ENCODE measurements at regions of chr1 and their contacts with region 1.

Region 1: GRCh38 chr1:201709564-201710295 is 119.2 kb upstream of the IPO9 start:
- DNase-seq: no peak
- H3K4me3 ChIP-seq: no peak overlapping the region
- H3K27ac ChIP-seq: peak overlapping the region; percentile 70
- H3K27me3 ChIP-seq: no peaks in the 10 kb centered on the region
- CTCF ChIP-seq: peak; percentile 85

Region 2: DNA sequence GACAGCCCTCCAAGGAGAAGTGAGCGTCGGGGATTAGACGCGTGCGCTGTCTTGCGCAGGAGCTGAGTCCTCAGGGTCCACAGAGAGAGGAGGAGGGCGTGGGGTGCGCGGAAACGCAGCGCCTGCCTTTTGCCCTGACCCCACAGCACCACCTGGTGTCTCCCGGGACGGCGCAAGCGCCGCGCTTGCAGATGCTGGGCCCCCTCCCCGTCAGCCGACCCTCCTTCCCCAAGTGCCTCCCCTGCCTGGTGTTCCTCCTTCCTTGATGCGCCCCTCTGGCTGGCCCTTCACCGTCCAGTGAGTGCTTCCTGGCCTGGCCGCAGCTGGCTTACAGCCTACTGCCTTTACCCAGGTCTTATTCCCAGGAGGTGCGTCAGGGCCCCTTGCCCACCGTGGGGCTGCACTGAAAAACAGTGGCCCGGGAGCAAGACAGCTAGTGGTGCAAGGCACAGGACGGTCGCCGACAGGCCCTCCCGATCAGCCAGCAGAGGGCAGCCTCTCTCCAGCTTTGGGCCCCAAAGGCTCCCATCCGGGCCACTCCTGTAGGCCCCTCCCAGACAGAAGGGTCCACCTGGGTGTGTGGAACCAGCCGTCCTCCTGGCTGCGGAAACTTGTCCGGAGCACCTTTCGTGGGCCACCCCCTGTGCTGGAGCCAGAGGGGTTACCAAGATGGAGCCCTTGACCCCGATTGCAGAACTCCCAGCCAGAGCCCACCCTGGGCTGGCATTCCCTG is 227.8 kb before region 1 on chr1:
- CTCF ChIA-PET with region 1: no interaction called
- POLR2A ChIA-PET with region 1: no interaction called
- DNase-seq: no peak
- H3K4me3 ChIP-seq: no peak overlapping the region
- H3K27ac ChIP-seq: no peak overlapping the region
- H3K27me3 ChIP-seq: no peaks in the 10 kb centered on the region
- CTCF ChIP-seq: peak; percentile 82

Region 3: GRCh38 chr1:201559679-201560162 is 150.0 kb before region 1 on chr1:
- CTCF ChIA-PET with region 1: interaction called, 148 read pairs
- POLR2A ChIA-PET with region 1: interaction called, 4 read pairs
- DNase-seq: peak; percentile 74
- H3K4me3 ChIP-seq: no peak overlapping the region
- H3K27ac ChIP-seq: no peak overlapping the region
- H3K27me3 ChIP-seq: no peaks in the 10 kb centered on the region
- CTCF ChIP-seq: peak; percentile 96

Region 4: GRCh38 chr1:201719812-201720521 is 10.2 kb after region 1 on chr1:
- CTCF ChIA-PET with region 1: interaction called, 28 read pairs
- POLR2A ChIA-PET with region 1: interaction called, 6 read pairs
- DNase-seq: peak; percentile 54
- H3K4me3 ChIP-seq: no peak overlapping the region
- H3K27ac ChIP-seq: peak overlapping the region; percentile 65
- H3K27me3 ChIP-seq: no peaks in the 10 kb centered on the region
- CTCF ChIP-seq: no peak

Region 5: GRCh38 chr1:201748335-201748734 is 38.6 kb after region 1 on chr1:
- CTCF ChIA-PET with region 1: interaction called, 15 read pairs
- POLR2A ChIA-PET with region 1: interaction called, 8 read pairs
- DNase-seq: peak; percentile 74
- H3K4me3 ChIP-seq: no peak overlapping the region
- H3K27ac ChIP-seq: peak overlapping the region; percentile 85
- H3K27me3 ChIP-seq: no peaks in the 10 kb centered on the region
- CTCF ChIP-seq: no peak

Region 6: DNA sequence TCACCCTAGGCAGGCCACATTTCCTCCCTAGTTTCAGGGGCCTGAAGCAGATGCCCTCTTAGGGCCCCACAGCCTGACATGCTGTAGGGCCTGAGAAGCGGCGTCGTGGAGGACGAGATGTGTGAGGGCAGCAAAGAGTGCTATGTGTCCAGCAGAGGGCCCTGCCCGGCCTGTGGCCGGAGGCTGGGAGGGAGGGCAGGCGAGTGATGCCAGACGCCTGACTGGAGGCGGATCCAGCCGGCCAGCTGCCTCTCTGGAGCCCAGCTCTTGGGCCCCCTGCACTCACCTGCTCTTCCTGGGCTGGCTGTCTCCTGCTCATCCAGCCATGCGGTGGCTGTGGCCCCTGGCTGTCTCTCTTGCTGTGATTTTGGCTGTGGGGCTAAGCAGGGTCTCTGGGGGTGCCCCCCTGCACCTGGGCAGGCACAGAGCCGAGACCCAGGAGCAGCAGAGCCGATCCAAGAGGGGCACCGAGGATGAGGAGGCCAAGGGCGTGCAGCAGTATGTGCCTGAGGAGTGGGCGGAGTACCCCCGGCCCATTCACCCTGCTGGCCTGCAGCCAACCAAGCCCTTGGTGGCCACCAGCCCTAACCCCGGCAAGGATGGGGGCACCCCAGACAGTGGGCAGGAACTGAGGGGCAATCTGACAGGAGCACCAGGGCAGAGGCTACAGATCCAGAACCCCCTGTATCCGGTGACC is 413.1 kb after region 1 on chr1 and contains the start of gene GPR37L1:
- CTCF ChIA-PET with region 1: no interaction called
- POLR2A ChIA-PET with region 1: no interaction called
- DNase-seq: no peak
- H3K4me3 ChIP-seq: no peak within 1 kb of the TSS
- H3K27ac ChIP-seq: no peak within 1 kb of the TSS
- H3K27me3 ChIP-seq: peaks cover 26% of the 10 kb centered on the region
- CTCF ChIP-seq: peak; percentile 57
- polyA plus RNA-seq, gene GPR37L1: not detected in 2 replicates